Activated T-helper 1 cell treated with anti-CD3 and anti-CD28 coated beads, Interleukin-12 subunit alpha, Interleukin-12 subunit beta, Interleukin-2, Interleukin-4 antibody, amounts not matched to agents 30 ng/mL and 10 ng/mL and 1 ng/mL, durations not matched to agents 14 hours and 24 hours and 36 hours (primary cell): ENCODE measurements at regions of chr5 and their contacts with region 1.

Region 1: DNA sequence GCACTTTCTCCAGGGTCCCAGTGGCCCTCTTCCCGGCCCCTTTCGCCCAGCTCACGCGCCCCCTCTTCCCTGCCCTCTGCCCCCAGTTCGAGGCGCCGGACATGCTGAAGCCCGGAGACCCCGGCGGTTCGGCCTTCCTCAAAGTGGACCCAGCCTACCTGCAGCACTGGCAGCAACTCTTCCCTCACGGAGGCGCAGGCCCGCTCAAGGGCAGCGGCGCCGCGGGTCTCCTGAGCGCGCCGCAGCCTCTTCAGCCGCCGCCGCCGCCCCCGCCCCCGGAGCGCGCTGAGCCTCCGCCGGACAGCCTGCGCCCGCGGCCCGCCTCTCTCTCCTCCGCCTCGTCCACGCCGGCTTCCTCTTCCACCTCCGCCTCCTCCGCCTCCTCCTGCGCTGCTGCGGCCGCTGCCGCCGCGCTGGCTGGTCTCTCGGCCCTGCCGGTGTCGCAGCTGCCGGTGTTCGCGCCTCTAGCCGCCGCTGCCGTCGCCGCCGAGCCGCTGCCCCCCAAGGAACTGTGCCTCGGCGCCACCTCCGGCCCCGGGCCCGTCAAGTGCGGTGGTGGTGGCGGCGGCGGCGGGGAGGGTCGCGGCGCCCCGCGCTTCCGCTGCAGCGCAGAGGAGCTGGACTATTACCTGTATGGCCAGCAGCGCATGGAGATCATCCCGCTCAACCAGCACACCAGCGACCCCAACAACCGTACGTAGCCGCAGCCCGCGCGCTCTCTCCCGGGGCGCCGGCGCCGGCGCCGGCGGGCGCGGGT is 1.1 kb downstream of the PRDM6 start:
- DNase-seq: no peak
- H3K4me3 Mint-ChIP-seq: no peak overlapping the region
- H3K27ac Mint-ChIP-seq: no peak overlapping the region
- H3K4me1 Mint-ChIP-seq: peaks cover 10% of the 10 kb centered on the region
- H3K27me3 Mint-ChIP-seq: peaks cover 78% of the 10 kb centered on the region

Region 2: DNA sequence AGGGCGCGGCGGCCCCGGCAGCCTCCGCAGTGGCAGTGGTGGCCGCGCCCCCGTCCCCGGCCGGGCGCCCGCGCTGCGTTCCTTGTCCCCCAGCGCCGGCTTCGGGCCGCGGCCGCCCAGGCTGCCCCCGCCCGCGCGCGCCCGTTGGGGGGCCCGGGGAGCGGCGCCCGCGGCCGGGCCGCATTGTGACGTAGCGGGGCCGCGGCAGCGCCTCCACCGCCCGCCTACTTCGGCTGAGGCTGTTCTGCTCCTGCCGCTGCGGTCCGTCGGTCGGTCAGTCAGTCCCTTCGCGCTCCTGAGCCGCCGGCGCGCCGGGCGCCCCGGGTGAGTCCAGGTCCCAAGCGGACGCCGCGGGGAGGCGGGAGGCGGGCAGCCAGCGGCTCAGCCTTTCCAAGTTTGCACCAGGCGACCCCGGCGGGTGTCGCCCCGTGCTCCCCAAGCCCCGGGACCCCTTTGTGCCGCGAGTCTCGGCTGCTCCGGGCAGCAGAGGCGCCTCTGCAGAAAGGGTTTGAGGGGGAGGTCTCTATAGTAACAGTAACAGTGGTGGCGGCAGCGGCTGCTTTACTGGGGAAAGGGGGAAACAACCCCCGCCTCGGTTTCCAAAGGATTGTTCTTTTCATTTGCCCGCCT is 778.0 kb before region 1 on chr5 and contains the start of gene SNCAIP:
- intact Hi-C with region 1: loop called (anchors 10 kb)
- DNase-seq: no peak
- H3K4me3 Mint-ChIP-seq: peak within 1 kb of the TSS; percentile 33
- H3K27ac Mint-ChIP-seq: no peak within 1 kb of the TSS
- H3K4me1 Mint-ChIP-seq: no peaks in the 10 kb centered on the region
- H3K27me3 Mint-ChIP-seq: peaks cover 53% of the 10 kb centered on the region
- total RNA-seq, gene SNCAIP: not detected in 2 replicates

Region 3: GRCh38 chr5:123036391-123037103 is 53.5 kb before region 1 on chr5 and contains the start of gene PPIC:
- intact Hi-C with region 1: loop called (anchors 2 kb)
- DNase-seq: no peak
- H3K4me3 Mint-ChIP-seq: peak within 1 kb of the TSS; percentile 35
- H3K27ac Mint-ChIP-seq: no peak within 1 kb of the TSS
- H3K4me1 Mint-ChIP-seq: peaks cover 5% of the 10 kb centered on the region
- H3K27me3 Mint-ChIP-seq: peaks cover 39% of the 10 kb centered on the region
- total RNA-seq, gene PPIC: not detected in 2 replicates